CD4-positive, alpha-beta memory T cell (primary cell): ENCODE measurements at regions of chr10 and their contacts with region 1.

Region 1: GRCh38 chr10:124388823-124389612 is 29.7 kb downstream of the OAT start:
- DNase-seq: peak; percentile 86 to 92 (median 90)
- H3K4me3 ChIP-seq: peak overlapping the region in 1 of 2 donors; percentile 71
- H3K4me3 Mint-ChIP-seq: peak overlapping the region in 6 of 8 donors; percentile 27 to 73 (median 66)
- H3K27ac ChIP-seq: peak overlapping the region; percentile 29
- H3K27ac Mint-ChIP-seq: peak overlapping the region in 1 of 7 donors; percentile 30
- H3K4me1 ChIP-seq: peaks cover 11% of the 10 kb centered on the region
- H3K4me1 Mint-ChIP-seq: peaks cover 0 to 5% (median 2%) of the 10 kb centered on the region in 4 donors
- H3K27me3 ChIP-seq: no peaks in the 10 kb centered on the region
- H3K27me3 Mint-ChIP-seq: peaks cover 0 to 7% of the 10 kb centered on the region in 2 donors

Region 2: GRCh38 chr10:123132576-123133477 is 1256.2 kb before region 1 on chr10:
- CTCF ChIA-PET with region 1: no interaction called
- POLR2A ChIA-PET with region 1: no interaction called
- intact Hi-C with region 1: loop called (anchors 2 kb)
- DNase-seq: peak; percentile 78 to 82 (median 79)
- H3K4me3 ChIP-seq: no peak overlapping the region
- H3K4me3 Mint-ChIP-seq: peak overlapping the region; percentile 36 to 92 (median 79)
- H3K27ac ChIP-seq: no peak overlapping the region
- H3K27ac Mint-ChIP-seq: peak overlapping the region in 6 of 7 donors; percentile 26 to 92 (median 72)
- H3K4me1 ChIP-seq: peaks cover 46% of the 10 kb centered on the region
- H3K4me1 Mint-ChIP-seq: peaks cover 14 to 43% (median 29%) of the 10 kb centered on the region in 4 donors
- H3K27me3 ChIP-seq: peaks cover 35% of the 10 kb centered on the region
- H3K27me3 Mint-ChIP-seq: peaks cover 51 to 60% of the 10 kb centered on the region in 2 donors

Region 3: GRCh38 chr10:124001391-124002148 is 387.4 kb before region 1 on chr10:
- CTCF ChIA-PET with region 1: interaction called, 296 read pairs
- POLR2A ChIA-PET with region 1: interaction called, 16 read pairs
- intact Hi-C with region 1: no loop called
- DNase-seq: no peak
- H3K4me3 ChIP-seq: no peak overlapping the region
- H3K4me3 Mint-ChIP-seq: no peak overlapping the region
- H3K27ac ChIP-seq: no peak overlapping the region
- H3K27ac Mint-ChIP-seq: peak overlapping the region in 1 of 7 donors; percentile 16
- H3K4me1 ChIP-seq: no peaks in the 10 kb centered on the region
- H3K4me1 Mint-ChIP-seq: no peaks in the 10 kb centered on the region
- H3K27me3 ChIP-seq: no peaks in the 10 kb centered on the region
- H3K27me3 Mint-ChIP-seq: peaks cover 0 to 20% of the 10 kb centered on the region in 2 donors

Region 4: GRCh38 chr10:124364633-124365032 is 24.4 kb before region 1 on chr10:
- CTCF ChIA-PET with region 1: interaction called, 10 read pairs
- POLR2A ChIA-PET with region 1: no interaction called
- intact Hi-C with region 1: no loop called
- DNase-seq: no peak
- H3K4me3 ChIP-seq: no peak overlapping the region
- H3K4me3 Mint-ChIP-seq: no peak overlapping the region
- H3K27ac ChIP-seq: no peak overlapping the region
- H3K27ac Mint-ChIP-seq: no peak overlapping the region
- H3K4me1 ChIP-seq: no peaks in the 10 kb centered on the region
- H3K4me1 Mint-ChIP-seq: no peaks in the 10 kb centered on the region
- H3K27me3 ChIP-seq: no peaks in the 10 kb centered on the region
- H3K27me3 Mint-ChIP-seq: peaks cover 6 to 11% of the 10 kb centered on the region in 2 donors

Region 5: DNA sequence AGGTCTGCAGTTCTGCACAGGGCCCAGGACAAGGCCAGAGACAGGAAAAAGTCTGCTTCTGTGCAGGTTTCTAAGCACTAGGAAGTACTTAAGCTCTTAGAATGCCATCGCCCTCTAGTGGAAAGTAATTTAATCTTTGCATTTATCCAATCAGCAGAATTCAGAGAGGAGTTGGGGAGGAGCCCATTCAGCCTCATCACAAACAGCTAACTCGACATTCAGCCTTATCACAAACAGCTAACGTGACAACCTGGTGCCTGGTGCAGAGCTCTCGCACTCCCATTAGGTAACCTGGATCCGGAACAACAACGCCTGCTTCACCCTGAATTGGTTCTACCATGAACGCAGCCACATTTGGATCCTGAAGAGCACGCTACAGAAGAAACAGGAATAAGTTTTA is 14.5 kb after region 1 on chr10:
- CTCF ChIA-PET with region 1: interaction called, 38 read pairs
- POLR2A ChIA-PET with region 1: no interaction called
- intact Hi-C with region 1: loop called (anchors 1 kb)
- DNase-seq: peak; percentile 54 to 75 (median 68)
- H3K4me3 ChIP-seq: no peak overlapping the region
- H3K4me3 Mint-ChIP-seq: peak overlapping the region in 1 of 8 donors; percentile 45
- H3K27ac ChIP-seq: no peak overlapping the region
- H3K27ac Mint-ChIP-seq: peak overlapping the region; percentile 39 to 90 (median 85)
- H3K4me1 ChIP-seq: peaks cover 7% of the 10 kb centered on the region
- H3K4me1 Mint-ChIP-seq: peaks cover 8 to 11% (median 9%) of the 10 kb centered on the region in 4 donors
- H3K27me3 ChIP-seq: no peaks in the 10 kb centered on the region
- H3K27me3 Mint-ChIP-seq: no peaks in the 10 kb centered on the region